GM18951 (cell line): ENCODE measurements at regions of chr14 and their contacts with region 1.

Region 1: DNA sequence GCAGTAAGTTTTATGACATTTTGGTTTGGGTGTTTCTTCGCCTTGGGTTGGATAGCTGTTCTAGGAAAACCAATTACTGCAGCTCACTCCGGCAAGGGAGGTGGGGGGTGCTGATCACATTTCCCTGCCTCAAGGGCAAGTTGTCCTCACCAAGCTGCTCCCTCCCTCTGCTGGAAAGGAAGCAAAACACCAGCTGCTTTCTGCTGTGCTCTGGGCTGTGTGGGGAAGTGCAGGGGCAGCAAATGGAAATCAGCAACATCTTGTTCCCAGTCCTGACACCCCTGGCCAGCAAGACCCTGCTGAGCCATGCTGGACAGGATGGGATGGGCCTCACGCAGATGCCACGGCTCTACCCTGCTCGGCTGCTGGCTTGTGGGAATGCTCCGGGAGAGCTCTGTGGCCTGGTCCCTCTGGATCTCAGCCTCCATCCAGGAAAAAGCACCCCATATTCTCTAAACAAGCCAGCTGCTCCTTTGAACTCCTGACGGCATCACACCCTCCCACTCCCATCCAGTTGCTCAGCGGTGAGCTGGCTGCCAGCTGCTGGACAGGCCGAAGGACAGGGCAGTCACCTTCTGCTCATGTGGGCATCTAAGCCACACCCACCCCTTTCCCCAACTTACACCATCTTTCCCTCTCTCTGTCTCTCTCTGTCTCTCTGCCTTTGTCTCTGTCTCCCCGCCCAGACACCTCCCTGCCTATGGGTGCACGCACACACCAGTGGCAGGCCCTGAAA is 52.4 kb upstream of the EIF5 start:
- POLR2A ChIP-seq: no peak

Region 2: DNA sequence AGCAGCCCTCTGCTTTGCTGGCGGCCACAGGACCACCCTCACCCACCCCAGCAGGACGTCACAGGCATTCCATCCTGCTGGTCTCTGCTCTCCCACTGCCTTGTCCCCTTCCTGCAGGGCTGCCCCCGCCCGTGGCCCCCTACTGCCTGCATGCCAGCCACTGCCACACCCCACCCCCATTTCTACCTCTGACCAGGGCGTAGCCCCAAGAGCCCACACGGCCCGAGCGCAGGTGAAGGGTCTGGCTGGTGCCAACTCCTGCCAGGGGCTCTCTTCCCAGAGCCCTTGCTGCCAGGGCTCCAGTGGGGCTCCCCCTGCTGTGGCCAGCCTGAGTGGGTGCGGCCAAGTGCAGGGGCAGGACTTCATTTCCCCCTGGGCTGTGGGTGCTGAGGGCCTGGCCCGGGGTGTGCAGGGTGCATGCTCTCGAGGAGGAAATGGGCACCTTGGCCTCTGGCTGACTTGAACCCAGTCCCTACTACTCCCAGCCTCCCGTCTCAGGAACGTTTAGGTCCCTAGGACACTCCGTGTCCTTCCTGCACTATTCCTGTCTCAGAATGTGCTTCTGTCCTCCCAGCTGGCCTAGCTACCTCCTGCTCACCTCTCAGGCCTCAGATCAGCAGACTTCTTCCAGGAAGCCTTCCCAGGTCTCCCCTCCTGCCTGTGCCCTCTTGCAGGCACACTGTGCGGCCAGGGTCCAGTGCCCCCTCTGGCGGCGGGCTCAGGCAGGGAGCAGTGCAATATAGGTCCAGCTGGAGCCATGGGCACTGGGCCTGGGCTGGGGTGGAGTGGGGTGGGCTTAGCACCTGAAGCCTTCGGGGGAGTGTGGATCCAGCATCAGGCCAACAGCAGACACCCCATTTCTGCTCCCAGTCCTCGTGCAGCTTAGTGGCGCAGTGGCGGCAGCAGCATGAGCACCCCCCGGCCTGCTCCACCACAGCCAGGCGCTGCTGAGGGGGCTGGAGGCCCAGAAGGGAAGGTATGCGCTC is 196.3 kb before region 1 on chr14:
- in situ Hi-C with region 1: loop called (anchors 10 kb)
- POLR2A ChIP-seq: no peak